H1 (cell line): ENCODE measurements at regions of chr1 and their contacts with region 1.

Region 1: GRCh38 chr1:21490774-21491553 is 18.3 kb upstream of the ALPL start:
- DNase-seq: no peak
- H3K4me3 ChIP-seq: peak overlapping the region in 1 of 4 experiments; percentile 29; a peak in 2 of 8 replicates
- H3K27ac ChIP-seq: no peak overlapping the region
- H3K4me1 ChIP-seq: peaks cover 5 to 8% (median 7%) of the 10 kb centered on the region in 4 experiments; a peak in 5 of 7 replicates
- H3K27me3 ChIP-seq: no peaks in the 10 kb centered on the region
- CTCF ChIP-seq: peak; percentile 87 to 98 (median 98)
- EP300 ChIP-seq: no peak
- POLR2A ChIP-seq: no peak
- RAD21 ChIP-seq: peak; percentile 83 to 87

Region 2: GRCh38 chr1:21337928-21338572 is 152.9 kb before region 1 on chr1:
- CTCF ChIA-PET with region 1: no interaction called
- POLR2A ChIA-PET with region 1: no interaction called
- DNase-seq: no peak
- H3K4me3 ChIP-seq: no peak overlapping the region
- H3K27ac ChIP-seq: no peak overlapping the region
- H3K4me1 ChIP-seq: peaks cover 0 to 15% (median 10%) of the 10 kb centered on the region in 4 experiments; a peak in 6 of 7 replicates
- H3K27me3 ChIP-seq: peaks cover 0 to 4% (median 0%) of the 10 kb centered on the region in 4 experiments; a peak in 4 of 7 replicates
- CTCF ChIP-seq: no peak
- EP300 ChIP-seq: no peak
- POLR2A ChIP-seq: no peak
- RAD21 ChIP-seq: no peak

Region 3: GRCh38 chr1:21378705-21379494 is 112.1 kb before region 1 on chr1:
- CTCF ChIA-PET with region 1: interaction called, 11 read pairs
- POLR2A ChIA-PET with region 1: no interaction called
- DNase-seq: no peak
- H3K4me3 ChIP-seq: no peak overlapping the region
- H3K27ac ChIP-seq: no peak overlapping the region
- H3K4me1 ChIP-seq: peaks cover 0 to 3% (median 3%) of the 10 kb centered on the region in 4 experiments; a peak in 3 of 7 replicates
- H3K27me3 ChIP-seq: no peaks in the 10 kb centered on the region
- CTCF ChIP-seq: no peak
- EP300 ChIP-seq: no peak
- POLR2A ChIP-seq: no peak
- RAD21 ChIP-seq: no peak

Region 4: GRCh38 chr1:21384620-21385019 is 106.3 kb before region 1 on chr1:
- CTCF ChIA-PET with region 1: interaction called, 11 read pairs
- POLR2A ChIA-PET with region 1: no interaction called
- DNase-seq: no peak
- H3K4me3 ChIP-seq: no peak overlapping the region
- H3K27ac ChIP-seq: no peak overlapping the region
- H3K4me1 ChIP-seq: peaks cover 0 to 8% (median 3%) of the 10 kb centered on the region in 4 experiments; a peak in 3 of 7 replicates
- H3K27me3 ChIP-seq: no peaks in the 10 kb centered on the region
- CTCF ChIP-seq: no peak
- EP300 ChIP-seq: no peak
- POLR2A ChIP-seq: no peak
- RAD21 ChIP-seq: no peak